ENCODE measurements at regions of chr11 and their contacts with region 1.

Region 1: GRCh38 chr11:73141848-73142286 is 251 bp downstream of the FCHSD2 start:
- DNase-seq: peak; percentile 65
- H3K4me3 Mint-ChIP-seq: peak overlapping the region; percentile 90
- H3K27ac Mint-ChIP-seq: peak overlapping the region; percentile 88
- H3K4me1 Mint-ChIP-seq: peaks cover 36% of the 10 kb centered on the region
- H3K27me3 Mint-ChIP-seq: no peaks in the 10 kb centered on the region

Region 2: GRCh38 chr11:72969894-72970335 is 172.0 kb before region 1 on chr11:
- CTCF ChIA-PET with region 1: interaction called, 3 read pairs
- POLR2A ChIA-PET with region 1: no interaction called
- intact Hi-C with region 1: loop called (anchors 2 kb)
- DNase-seq: no peak
- H3K4me3 Mint-ChIP-seq: no peak overlapping the region
- H3K27ac Mint-ChIP-seq: peak overlapping the region; percentile 24
- H3K4me1 Mint-ChIP-seq: peaks cover 45% of the 10 kb centered on the region
- H3K27me3 Mint-ChIP-seq: no peaks in the 10 kb centered on the region

Region 3: DNA sequence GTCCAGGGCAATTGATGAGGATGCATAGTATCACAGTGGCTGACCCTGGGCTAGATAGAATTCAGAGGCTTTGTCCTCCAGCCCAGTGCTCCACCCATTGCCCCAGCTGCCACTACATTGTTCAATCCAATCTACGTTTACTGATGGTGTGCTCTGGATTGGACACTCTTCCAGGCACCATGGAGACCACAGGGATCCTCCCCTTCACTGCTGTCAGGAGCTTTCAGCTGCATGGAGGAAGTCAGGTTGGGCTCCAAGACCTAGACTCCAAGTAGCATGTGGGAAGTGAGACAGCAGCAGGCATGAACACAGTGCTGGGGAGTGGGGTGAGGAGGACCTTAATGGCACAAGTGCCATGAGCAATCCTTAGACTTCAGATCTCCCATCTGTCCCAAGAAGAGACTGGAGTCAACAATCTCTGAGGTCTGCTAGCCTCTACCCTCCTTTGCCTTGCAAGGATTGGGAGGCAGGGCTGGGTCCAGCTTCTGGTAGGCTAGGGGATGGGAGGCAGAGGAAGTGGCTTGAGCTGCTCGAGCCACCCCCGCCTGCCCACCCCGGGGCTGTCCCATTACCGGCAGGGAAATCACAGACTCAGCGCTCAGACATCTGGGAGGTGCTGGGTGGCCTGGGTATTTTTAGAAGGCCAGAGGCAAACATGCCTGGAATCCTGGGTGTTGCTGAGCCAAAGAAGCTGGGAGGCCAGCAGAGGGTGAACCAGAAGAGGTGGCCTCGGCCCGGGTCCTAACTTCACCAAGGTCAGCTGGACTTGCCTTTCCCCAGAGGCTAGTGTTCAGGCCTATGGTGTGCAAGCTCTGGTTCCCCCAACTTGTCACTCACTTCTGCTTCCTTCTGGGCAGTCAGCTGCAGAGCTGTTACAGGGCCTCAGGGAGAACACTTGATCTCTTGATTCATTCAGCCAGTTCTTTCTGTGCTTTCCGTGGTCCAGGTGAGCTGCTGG is 15.5 kb after region 1 on chr11:
- CTCF ChIA-PET with region 1: interaction called, 22 read pairs
- POLR2A ChIA-PET with region 1: interaction called, 5 read pairs
- intact Hi-C with region 1: loop called (anchors 1 kb)
- DNase-seq: peak; percentile 33
- H3K4me3 Mint-ChIP-seq: no peak overlapping the region
- H3K27ac Mint-ChIP-seq: no peak overlapping the region
- H3K4me1 Mint-ChIP-seq: peaks cover 39% of the 10 kb centered on the region
- H3K27me3 Mint-ChIP-seq: no peaks in the 10 kb centered on the region

Region 4: DNA sequence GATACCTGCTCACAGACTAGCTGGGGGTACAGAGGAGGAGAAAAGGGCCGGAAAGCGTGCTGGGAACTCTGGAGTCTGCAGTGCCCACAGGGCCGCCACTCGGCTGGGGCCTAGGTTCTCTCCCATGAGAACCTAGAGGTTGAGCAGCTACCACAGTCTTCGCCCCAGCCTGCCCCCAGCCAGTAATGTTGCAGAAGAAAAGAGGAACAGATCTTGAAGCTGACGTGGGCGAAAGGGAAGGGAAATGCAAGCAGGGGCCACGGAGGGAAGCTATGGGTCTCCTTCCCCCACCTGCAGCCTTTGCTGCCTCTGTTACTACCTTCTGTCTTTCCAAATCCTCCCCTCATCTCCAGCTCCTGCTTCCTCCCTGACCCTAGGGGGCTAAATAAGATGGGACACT is 47.4 kb after region 1 on chr11:
- CTCF ChIA-PET with region 1: no interaction called
- POLR2A ChIA-PET with region 1: no interaction called
- intact Hi-C with region 1: no loop called
- DNase-seq: no peak
- H3K4me3 Mint-ChIP-seq: no peak overlapping the region
- H3K27ac Mint-ChIP-seq: no peak overlapping the region
- H3K4me1 Mint-ChIP-seq: peaks cover 5% of the 10 kb centered on the region
- H3K27me3 Mint-ChIP-seq: peaks cover 5% of the 10 kb centered on the region